Activated T-helper 1 cell treated with anti-CD3 and anti-CD28 coated beads, Interleukin-12 subunit alpha, Interleukin-12 subunit beta, Interleukin-2, Interleukin-4 antibody, amounts not matched to agents 30 ng/mL and 10 ng/mL and 1 ng/mL, durations not matched to agents 14 hours and 24 hours and 36 hours (primary cell): ENCODE measurements at regions of chr16 and their contacts with region 1.

Region 1: DNA sequence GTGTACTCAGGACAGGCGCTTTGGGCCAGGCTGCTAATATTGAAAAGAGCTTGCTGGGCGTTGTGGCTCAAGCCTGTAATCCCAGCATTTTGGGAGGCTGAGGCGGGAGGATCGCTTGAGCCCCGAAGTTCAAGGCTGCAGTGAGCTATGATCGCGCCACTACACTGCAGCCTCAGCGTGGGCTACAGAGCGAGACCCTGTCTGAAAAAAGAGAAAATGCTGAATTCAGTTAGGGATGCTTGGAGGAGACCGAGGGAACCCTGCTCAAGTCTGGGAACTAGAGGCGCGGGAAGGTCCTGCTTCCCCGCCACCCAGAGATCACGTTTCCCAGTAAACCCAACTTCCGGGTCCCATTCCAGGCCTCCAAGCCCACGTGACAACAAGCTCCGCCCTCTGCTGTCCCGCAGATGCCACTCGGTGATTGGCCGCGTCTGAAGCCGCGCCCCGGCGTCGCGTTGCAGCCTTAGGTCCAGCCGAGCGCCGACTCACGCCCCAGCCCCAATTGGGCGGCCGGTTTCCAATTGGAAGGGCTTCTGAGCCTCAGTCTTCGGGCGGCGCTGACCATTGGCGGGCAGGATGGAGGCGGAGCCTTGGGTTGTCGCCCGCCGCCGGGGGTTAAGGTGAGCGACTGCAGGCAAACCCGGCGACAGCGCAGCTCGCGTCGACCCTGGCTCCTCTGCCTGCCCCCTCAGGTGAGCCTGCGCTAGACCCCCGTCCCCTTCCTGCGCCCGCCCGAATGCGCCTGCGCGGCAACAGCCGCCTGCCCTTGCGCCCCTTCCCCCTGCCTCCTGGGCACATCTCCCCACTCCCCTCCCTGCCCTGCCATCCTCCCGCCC is at the start of gene PHKG2:
- DNase-seq: peak; percentile 97
- H3K4me3 Mint-ChIP-seq: peak within 1 kb of the TSS; percentile 93
- H3K27ac Mint-ChIP-seq: peak within 1 kb of the TSS; percentile 83
- H3K4me1 Mint-ChIP-seq: peaks cover 19% of the 10 kb centered on the region
- H3K27me3 Mint-ChIP-seq: no peaks in the 10 kb centered on the region
- total RNA-seq, gene PHKG2: 42.4 and 43.6 TPM in 2 replicates

Region 2: DNA sequence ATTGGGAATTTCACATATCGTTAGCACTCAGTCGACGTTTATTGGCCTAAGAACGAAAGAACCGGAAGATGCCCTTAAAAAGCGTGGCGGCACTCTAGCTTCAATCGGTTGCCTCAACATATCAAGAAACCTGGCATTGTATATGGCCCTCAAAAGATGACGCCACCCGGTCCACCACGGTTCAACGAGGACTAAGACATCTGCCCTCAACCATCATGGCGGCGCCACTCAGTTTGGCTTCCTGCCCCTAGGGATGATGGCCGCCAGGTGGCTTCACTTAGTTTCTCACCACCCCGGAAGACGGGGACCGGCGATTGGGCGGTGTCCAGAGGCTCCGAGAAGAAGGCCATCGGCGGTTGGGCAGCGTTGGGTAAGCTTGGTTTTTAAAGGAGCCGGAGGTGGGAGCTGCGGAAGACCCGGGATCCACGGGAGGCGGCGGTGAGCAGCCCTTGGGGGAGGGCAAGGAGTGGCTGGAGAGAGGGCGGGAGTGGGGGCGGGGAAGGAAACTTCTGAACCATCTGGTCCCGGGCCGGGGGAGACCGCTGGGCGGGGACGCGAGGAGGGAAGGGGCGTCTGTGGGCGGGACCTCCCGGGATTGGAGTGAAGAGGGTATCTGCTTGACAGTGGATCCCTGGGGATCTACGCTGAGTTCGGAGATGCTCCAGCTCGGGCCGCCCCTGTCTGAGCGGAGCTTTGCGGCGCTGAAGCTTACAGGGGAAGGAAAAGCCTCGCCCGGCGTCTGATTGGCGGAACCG is 97.5 kb before region 1 on chr16 and contains the start of gene PRR14:
- intact Hi-C with region 1: loop called (anchors 2 kb)
- DNase-seq: peak; percentile 98
- H3K4me3 Mint-ChIP-seq: peak within 1 kb of the TSS; percentile 97
- H3K27ac Mint-ChIP-seq: peak within 1 kb of the TSS; percentile 98
- H3K4me1 Mint-ChIP-seq: peaks cover 25% of the 10 kb centered on the region
- H3K27me3 Mint-ChIP-seq: peaks cover 2% of the 10 kb centered on the region
- total RNA-seq, gene PRR14: 91.9 and 97.4 TPM in 2 replicates

Region 3: DNA sequence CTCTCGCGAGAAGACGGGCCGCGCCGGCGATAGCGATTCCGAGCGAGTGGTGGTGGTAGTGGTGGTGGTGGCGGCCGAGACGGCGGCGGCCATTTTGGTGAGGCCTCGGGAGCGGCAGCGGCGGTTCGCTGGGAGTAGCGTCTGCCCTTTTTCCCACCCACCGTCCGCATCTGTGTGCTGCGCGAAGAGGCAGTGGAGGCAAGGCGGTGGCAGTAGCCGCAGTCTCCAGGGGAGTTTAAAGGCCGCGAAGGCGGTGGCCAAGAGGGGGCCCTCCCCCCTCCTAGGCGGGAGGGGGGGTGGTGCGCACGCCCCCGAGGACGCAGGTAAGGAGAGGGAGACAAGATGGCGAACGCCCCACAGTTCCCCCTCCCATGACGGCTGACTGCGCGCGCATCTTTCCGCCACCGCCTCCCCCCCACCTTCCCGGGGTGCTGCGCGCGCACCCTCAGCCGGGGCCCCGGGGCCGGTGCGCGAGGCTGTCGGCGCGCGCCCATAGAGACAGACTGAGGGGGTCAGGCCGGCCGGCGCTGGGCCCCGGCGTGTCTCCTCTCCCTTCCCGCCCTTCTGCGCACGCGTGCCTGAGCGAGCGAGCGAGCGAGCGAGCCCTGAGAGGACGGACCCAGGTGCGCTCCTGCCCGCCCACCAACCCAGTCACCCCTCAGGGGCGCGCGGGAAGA is 49.7 kb before region 1 on chr16:
- intact Hi-C with region 1: no loop called
- DNase-seq: peak; percentile 99
- H3K4me3 Mint-ChIP-seq: peak overlapping the region; percentile 99
- H3K27ac Mint-ChIP-seq: peak overlapping the region; percentile 99
- H3K4me1 Mint-ChIP-seq: peaks cover 42% of the 10 kb centered on the region
- H3K27me3 Mint-ChIP-seq: peaks cover 2% of the 10 kb centered on the region

Region 4: DNA sequence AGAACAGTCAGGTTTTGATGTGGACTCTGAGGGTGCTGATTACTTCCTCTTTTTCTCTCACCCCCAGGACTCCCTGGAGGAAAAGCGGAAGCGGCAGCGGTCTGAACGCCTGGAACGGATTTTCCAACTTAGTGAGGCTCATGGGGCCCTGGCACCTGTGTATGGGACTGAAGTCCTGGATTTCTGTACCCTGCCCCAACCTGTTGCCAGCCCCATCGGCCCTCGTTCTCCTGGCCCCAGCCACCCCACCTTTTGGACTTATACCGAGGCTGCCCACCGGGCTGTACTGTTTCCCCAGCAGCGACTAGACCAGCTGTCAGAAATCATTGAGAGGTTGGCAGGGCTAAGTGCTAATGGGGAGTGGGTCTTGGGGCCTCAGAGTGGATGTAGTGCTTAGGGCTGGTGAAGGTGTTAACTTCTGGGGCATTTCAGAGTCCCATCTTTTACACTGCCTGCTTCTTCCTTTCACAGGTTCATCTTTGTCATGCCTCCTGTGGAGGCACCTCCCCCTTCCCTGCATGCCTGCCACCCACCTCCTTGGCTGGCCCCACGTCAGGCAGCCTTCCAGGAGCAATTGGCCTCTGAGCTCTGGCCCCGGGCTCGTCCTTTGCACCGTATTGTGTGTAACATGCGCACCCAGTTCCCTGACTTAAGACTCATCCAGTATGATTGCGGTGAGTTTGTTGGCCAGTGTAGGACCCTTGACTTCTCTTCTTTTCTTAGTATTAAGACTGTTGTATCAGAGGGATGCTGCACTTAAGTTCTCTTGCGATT is 18.9 kb before region 1 on chr16:
- intact Hi-C with region 1: no loop called
- DNase-seq: no peak
- H3K4me3 Mint-ChIP-seq: no peak overlapping the region
- H3K27ac Mint-ChIP-seq: no peak overlapping the region
- H3K4me1 Mint-ChIP-seq: peaks cover 4% of the 10 kb centered on the region
- H3K27me3 Mint-ChIP-seq: no peaks in the 10 kb centered on the region

Region 5: DNA sequence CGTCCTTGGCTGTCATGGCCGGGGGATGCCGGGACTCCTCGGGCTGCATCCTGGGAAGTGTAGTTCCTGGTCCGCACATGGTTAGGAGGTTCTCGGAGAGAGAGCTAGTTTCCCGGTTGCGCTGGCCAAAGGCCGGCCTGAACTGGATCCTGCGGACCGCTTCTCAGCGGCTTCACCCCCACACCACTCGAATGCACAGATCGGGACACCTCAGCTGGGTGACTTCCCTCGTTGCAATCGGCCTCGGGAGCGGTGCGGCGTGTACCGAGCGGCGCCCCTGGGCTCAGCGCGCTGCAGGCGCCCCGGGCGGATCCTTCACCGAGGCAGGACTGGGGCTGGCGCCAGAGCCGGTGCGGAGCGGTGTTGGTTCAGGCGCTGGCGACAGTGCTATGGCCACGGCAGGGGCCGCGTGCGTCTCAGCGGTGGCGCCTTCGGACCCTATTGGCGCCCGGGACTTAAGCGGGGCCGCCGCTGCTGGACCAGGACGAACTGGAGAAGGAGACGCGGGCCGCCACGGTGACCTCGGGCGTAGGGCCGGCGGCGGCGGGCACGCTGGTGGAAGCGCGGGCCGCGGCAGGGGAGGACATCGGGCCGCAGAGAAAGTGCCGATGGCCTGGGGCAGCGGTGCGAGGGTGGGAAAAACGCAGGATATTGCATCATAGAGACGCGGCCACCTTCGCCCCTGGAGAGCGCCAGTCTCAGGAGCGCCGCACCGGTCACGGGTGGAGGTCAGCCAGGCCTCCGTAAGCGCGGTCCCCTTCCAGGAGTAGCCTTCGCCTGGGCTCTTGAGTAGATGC is 27.6 kb after region 1 on chr16:
- intact Hi-C with region 1: loop called (anchors 1 kb)
- DNase-seq: peak; percentile 56
- H3K4me3 Mint-ChIP-seq: peak overlapping the region; percentile 94
- H3K27ac Mint-ChIP-seq: peak overlapping the region; percentile 96
- H3K4me1 Mint-ChIP-seq: peaks cover 20% of the 10 kb centered on the region
- H3K27me3 Mint-ChIP-seq: no peaks in the 10 kb centered on the region

Region 6: DNA sequence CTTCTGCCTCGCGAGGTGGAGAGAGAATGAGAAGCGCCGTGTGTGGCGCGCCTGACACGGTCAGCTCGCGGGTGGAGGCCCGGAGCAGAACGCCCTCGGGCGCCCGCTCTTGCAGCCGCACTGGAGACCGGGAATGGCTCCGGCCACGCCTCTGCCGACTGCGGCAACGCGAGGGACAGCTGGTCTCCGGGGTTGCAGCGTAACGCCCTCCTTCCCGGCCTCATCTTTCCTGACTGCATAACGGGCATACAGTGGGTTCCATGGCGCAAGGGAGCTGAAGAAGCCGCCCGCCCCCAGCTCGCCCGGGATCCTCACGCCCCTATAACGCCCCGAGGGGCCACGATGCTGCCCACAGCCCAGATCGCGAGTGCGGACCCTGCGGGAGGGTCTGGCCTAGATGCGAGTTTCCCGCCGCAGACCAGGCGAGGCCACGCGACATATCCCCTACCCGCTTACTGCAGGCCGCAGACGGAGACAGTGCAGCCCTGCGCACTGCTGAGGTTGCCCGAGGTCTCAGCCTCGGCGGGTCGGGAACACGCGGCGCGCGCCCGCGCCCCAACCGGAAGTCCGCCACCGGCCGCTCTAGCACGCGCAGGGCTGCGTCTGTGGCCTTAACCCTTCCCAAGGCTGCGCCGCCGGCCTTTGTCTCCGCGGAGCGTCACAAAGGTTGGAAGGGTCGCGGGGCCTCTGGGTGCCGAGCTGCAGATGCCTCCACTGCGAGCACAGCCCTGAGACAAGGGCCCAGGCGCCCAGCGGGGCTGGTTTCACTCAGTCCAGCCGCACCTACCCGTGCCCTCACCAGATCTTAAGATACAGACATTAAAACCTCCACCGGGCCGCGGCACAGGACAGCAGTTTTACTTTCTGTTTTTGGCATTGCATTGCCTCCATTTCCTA is 127.1 kb after region 1 on chr16:
- intact Hi-C with region 1: loop called (anchors 1 kb)
- DNase-seq: peak; percentile 86
- H3K4me3 Mint-ChIP-seq: peak overlapping the region; percentile 97
- H3K27ac Mint-ChIP-seq: peak overlapping the region; percentile 94
- H3K4me1 Mint-ChIP-seq: peaks cover 23% of the 10 kb centered on the region
- H3K27me3 Mint-ChIP-seq: no peaks in the 10 kb centered on the region

Region 7: GRCh38 chr16:31032736-31033708 is 285.0 kb after region 1 on chr16 and contains the start of gene STX4:
- intact Hi-C with region 1: loop called (anchors 1 kb)
- DNase-seq: peak; percentile 97
- H3K4me3 Mint-ChIP-seq: peak within 1 kb of the TSS; percentile 95
- H3K27ac Mint-ChIP-seq: peak within 1 kb of the TSS; percentile 92
- H3K4me1 Mint-ChIP-seq: peaks cover 24% of the 10 kb centered on the region
- H3K27me3 Mint-ChIP-seq: no peaks in the 10 kb centered on the region
- total RNA-seq, gene STX4: 56.4 and 58.7 TPM in 2 replicates